ENCODE measurements at regions of chr18 and their contacts with region 1.

Region 1: GRCh38 chr18:73279498-73279897 is 411.7 kb upstream of the NETO1 start:
- DNase-seq: no peak
- ATAC-seq: no peak
- H3K4me3 ChIP-seq: no peak overlapping the region
- H3K4me3 Mint-ChIP-seq: no peak overlapping the region
- H3K27ac ChIP-seq: no peak overlapping the region
- H3K27ac Mint-ChIP-seq: no peak overlapping the region
- H3K4me1 ChIP-seq: no peaks in the 10 kb centered on the region
- H3K4me1 Mint-ChIP-seq: no peaks in the 10 kb centered on the region
- H3K27me3 ChIP-seq: no peaks in the 10 kb centered on the region
- H3K27me3 Mint-ChIP-seq: no peaks in the 10 kb centered on the region
- CTCF ChIP-seq: no peak

Region 2: GRCh38 chr18:73214967-73215366 is 64.5 kb before region 1 on chr18:
- CTCF ChIA-PET with region 1: no interaction called
- POLR2A ChIA-PET with region 1: no interaction called
- intact Hi-C with region 1: loop called in 1 of 2 experiments (anchors 10 kb)
- DNase-seq: no peak
- ATAC-seq: no peak
- H3K4me3 ChIP-seq: no peak overlapping the region
- H3K4me3 Mint-ChIP-seq: no peak overlapping the region
- H3K27ac ChIP-seq: no peak overlapping the region
- H3K27ac Mint-ChIP-seq: no peak overlapping the region
- H3K4me1 ChIP-seq: no peaks in the 10 kb centered on the region
- H3K4me1 Mint-ChIP-seq: no peaks in the 10 kb centered on the region
- H3K27me3 ChIP-seq: no peaks in the 10 kb centered on the region
- H3K27me3 Mint-ChIP-seq: no peaks in the 10 kb centered on the region
- CTCF ChIP-seq: no peak

Region 3: GRCh38 chr18:73264562-73264921 is 15.0 kb before region 1 on chr18:
- CTCF ChIA-PET with region 1: no interaction called
- POLR2A ChIA-PET with region 1: no interaction called
- intact Hi-C with region 1: no loop called
- DNase-seq: no peak
- ATAC-seq: no peak
- H3K4me3 ChIP-seq: no peak overlapping the region
- H3K4me3 Mint-ChIP-seq: no peak overlapping the region
- H3K27ac ChIP-seq: no peak overlapping the region
- H3K27ac Mint-ChIP-seq: no peak overlapping the region
- H3K4me1 ChIP-seq: no peaks in the 10 kb centered on the region
- H3K4me1 Mint-ChIP-seq: no peaks in the 10 kb centered on the region
- H3K27me3 ChIP-seq: no peaks in the 10 kb centered on the region
- H3K27me3 Mint-ChIP-seq: no peaks in the 10 kb centered on the region
- CTCF ChIP-seq: no peak